HepG2 (cell line): ENCODE measurements at regions of chr16 and their contacts with region 1.

Region 1: DNA sequence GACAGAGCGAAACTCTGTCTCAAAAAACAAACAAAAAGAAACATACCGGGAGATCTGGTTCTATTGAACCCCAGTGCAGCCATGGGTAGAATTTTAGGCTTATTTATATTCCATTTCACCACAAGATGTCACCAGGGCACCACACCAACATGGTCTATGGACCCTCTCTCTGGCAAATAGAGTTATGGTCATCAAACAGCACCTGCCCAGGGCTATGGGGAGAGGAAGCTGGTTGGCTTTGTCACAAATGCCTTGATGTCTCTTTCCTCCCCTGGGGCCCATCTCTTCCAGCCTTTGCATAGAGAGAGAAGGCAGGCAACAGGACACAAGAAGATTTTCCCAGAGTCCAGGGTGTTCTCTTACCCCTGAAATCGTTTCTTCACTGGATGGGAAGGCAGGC is 128.4 kb downstream of the WWOX start:
- DNase-seq: peak; percentile 74
- ATAC-seq: peak; percentile 98
- H3K4me3 ChIP-seq: no peak overlapping the region
- H3K27ac ChIP-seq: no peak overlapping the region
- H3K4me1 ChIP-seq: peaks cover 30% of the 10 kb centered on the region
- H3K27me3 ChIP-seq: no peaks in the 10 kb centered on the region
- CTCF ChIP-seq: peak; percentile 87
- EP300 ChIP-seq: no peak
- POLR2A ChIP-seq: no peak
- RAD21 ChIP-seq: peak; percentile 86

Region 2: DNA sequence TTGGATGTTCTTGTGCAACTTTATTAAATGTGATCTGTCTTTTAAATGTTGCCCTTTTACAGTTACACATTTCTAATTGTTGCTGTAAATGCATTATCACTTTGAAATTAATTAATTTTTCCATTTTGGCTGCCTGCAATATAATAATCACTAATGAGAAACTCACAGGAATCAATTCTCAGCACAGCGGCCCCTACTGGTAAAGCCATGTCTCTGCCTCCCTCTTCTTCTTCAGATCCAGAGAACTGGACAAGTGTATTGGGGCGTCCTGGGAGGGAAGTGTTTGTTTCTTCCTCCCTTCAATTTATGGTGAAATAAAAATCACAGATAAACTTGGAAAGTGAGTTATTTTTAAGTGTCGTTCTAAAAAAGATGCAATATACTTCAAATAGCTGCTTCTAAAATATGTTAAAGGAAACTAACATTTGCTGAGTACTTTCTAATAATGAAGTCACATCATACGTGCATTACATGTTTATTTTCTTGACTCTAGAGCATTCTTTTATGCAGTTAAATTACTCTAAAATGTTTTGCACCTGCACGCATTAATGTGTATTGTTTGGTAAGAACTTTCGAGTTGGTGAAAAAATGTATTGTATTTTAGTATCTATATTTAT is 209.6 kb after region 1 on chr16:
- CTCF ChIA-PET with region 1: interaction called, 11 read pairs
- POLR2A ChIA-PET with region 1: no interaction called
- in situ Hi-C with region 1: no loop called
- intact Hi-C with region 1: loop called (anchors 1 kb)
- DNase-seq: peak; percentile 38
- ATAC-seq: peak; percentile 47; the same call in 2 of the 3 replicates
- H3K4me3 ChIP-seq: no peak overlapping the region
- H3K27ac ChIP-seq: no peak overlapping the region
- H3K4me1 ChIP-seq: peaks cover 8% of the 10 kb centered on the region
- H3K27me3 ChIP-seq: no peaks in the 10 kb centered on the region
- CTCF ChIP-seq: peak; percentile 75
- EP300 ChIP-seq: no peak
- POLR2A ChIP-seq: no peak
- RAD21 ChIP-seq: peak; percentile 37; the same call in 1 of the 2 replicates

Region 3: GRCh38 chr16:79261481-79261940 is 1033.7 kb after region 1 on chr16:
- CTCF ChIA-PET with region 1: no interaction called
- POLR2A ChIA-PET with region 1: no interaction called
- in situ Hi-C with region 1: no loop called
- intact Hi-C with region 1: loop called (anchors 5 kb)
- DNase-seq: peak; percentile 21
- ATAC-seq: peak; percentile 96
- H3K4me3 ChIP-seq: no peak overlapping the region
- H3K27ac ChIP-seq: no peak overlapping the region
- H3K4me1 ChIP-seq: no peaks in the 10 kb centered on the region
- H3K27me3 ChIP-seq: 0 out of 5 replicates have a peak, but pooled peaks cover 0 to 5% of the 10 kb centered on the region in 2 experiments
- CTCF ChIP-seq: peak; percentile 80
- EP300 ChIP-seq: no peak
- POLR2A ChIP-seq: no peak
- RAD21 ChIP-seq: peak; percentile 50